Aorta (tissue), 5 donors: ENCODE measurements at regions of chr2 and their contacts with region 1.

Region 1: GRCh38 chr2:172924097-172924660 is 151.5 kb upstream of the MAP3K20 start:
- DNase-seq: no peak
- ATAC-seq: no peak
- H3K4me3 ChIP-seq: no peak overlapping the region
- H3K27ac ChIP-seq: no peak overlapping the region
- H3K4me1 ChIP-seq: peaks cover 0 to 3% of the 10 kb centered on the region in 2 donors
- H3K27me3 ChIP-seq: no peaks in the 10 kb centered on the region

Region 2: GRCh38 chr2:172821370-172822347 is 102.5 kb before region 1 on chr2:
- intact Hi-C with region 1: no loop called
- DNase-seq: no peak
- ATAC-seq: peak; percentile 58
- H3K4me3 ChIP-seq: no peak overlapping the region
- H3K27ac ChIP-seq: no peak overlapping the region
- H3K4me1 ChIP-seq: peaks cover 0 to 4% of the 10 kb centered on the region in 2 donors
- H3K27me3 ChIP-seq: no peaks in the 10 kb centered on the region

Region 3: DNA sequence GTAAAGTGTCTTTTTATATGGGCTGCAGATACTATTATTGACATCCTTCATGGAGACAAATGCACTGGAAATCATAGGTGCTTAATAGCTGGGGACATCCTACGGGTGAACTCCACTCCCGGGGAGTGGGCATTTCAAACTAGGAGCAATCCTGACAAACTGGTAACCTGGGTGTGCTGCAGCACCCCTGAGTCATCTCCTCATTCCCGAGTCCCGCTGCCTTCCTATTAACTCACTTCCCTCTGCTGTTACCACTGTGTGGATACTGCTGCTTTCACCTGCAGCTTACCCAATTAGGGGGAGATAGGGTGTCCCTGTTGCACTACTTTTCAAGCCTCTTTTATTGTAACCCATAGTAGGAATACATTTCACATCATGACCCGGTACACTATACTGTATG is 54.3 kb before region 1 on chr2:
- intact Hi-C with region 1: loop called in 1 of 2 experiments (anchors 2 kb)
- DNase-seq: no peak
- ATAC-seq: no peak
- H3K4me3 ChIP-seq: no peak overlapping the region
- H3K27ac ChIP-seq: no peak overlapping the region
- H3K4me1 ChIP-seq: no peaks in the 10 kb centered on the region
- H3K27me3 ChIP-seq: no peaks in the 10 kb centered on the region

Region 4: GRCh38 chr2:172972005-172972619 is 47.9 kb after region 1 on chr2:
- intact Hi-C with region 1: no loop called
- DNase-seq: no peak
- ATAC-seq: no peak
- H3K4me3 ChIP-seq: no peak overlapping the region
- H3K27ac ChIP-seq: no peak overlapping the region
- H3K4me1 ChIP-seq: no peaks in the 10 kb centered on the region
- H3K27me3 ChIP-seq: no peaks in the 10 kb centered on the region